Gastrocnemius medialis (tissue), 4 donors: ENCODE measurements at regions of chr6 and their contacts with region 1.

Region 1: DNA sequence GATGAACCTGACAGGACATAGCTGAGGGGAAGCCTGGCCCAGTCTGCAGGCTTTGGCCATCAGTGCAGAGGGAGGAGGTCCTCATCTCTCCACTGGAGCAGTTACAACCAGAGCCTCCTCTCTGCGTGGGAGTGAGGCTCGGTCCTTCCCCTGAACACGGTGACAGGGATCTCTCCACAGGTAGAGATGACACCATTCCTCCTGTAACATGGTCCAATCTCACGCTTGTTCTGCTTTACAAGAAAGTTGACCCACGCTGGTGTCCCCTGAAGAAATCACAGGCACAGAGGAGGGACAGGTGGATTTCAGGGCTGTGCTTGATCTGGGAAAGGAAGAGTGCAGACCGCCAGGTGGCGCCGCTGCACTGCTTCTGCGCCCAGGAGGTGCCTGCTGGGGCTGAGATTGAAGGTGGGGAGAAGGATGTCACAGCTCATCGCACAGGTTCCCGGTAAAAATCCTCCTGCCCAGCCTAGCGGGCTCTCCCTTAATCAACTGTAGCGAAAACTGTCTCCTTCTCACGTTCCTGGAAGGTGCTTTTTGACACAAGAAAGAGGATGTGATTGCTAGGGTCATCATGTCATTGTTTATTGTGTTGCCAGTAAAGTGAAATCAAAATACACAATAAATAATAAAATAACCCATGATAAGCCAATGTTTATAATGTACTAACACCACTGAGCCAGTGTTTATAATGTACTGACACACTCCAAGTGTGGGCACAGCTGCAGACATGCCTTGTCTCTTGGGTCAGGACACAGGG is 20.4 kb downstream of the HLA-G start:
- DNase-seq: peak; percentile 41 to 61
- ATAC-seq: peak; percentile 72 to 89
- H3K4me3 ChIP-seq: no peak overlapping the region
- H3K27ac ChIP-seq: no peak overlapping the region
- H3K4me1 ChIP-seq: peaks cover 0 to 4% of the 10 kb centered on the region in 2 donors
- H3K27me3 ChIP-seq: peaks cover 14 to 28% (median 26%) of the 10 kb centered on the region in 3 donors
- CTCF ChIP-seq: peak; percentile 91 to 93 (median 93)
- POLR2A ChIP-seq: no peak

Region 2: GRCh38 chr6:29976588-29977424 is 128.8 kb after region 1 on chr6:
- in situ Hi-C with region 1: no loop called
- intact Hi-C with region 1: loop called (anchors 2 kb)
- DNase-seq: peak; percentile 61 to 77
- ATAC-seq: peak; percentile 89 to 91
- H3K4me3 ChIP-seq: peak overlapping the region; percentile 58 to 80 (median 71)
- H3K27ac ChIP-seq: peak overlapping the region; percentile 88 to 97 (median 92)
- H3K4me1 ChIP-seq: peaks cover 7 to 19% of the 10 kb centered on the region in 2 donors
- H3K27me3 ChIP-seq: no peaks in the 10 kb centered on the region
- CTCF ChIP-seq: peak; percentile 4 to 37 (median 27)
- POLR2A ChIP-seq: peak; percentile 35 to 71

Region 3: DNA sequence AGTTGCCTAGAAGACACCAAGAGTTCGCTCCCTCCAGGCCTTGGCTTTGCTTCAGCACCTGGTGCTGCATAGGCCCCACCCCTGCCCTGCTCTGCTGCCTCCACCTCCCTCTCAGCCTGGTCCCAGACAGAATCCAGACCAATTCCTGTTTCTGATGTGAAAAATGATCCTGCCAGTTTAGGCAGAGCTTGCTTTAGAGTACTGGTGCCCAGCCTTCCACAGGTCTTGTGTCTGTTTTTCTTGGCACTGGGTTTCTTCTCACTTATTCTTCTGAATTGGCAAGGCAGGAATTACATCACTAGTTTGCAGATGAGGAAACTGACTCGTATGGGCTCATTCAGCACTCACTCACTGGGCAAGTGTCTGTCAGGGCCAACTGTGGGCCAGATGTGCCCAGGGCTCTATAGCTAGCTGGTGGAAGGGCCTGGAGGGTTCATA is 147.3 kb after region 1 on chr6:
- in situ Hi-C with region 1: loop called in 1 of 4 experiments (anchors 10 kb)
- intact Hi-C with region 1: no loop called
- DNase-seq: no peak
- ATAC-seq: no peak
- H3K4me3 ChIP-seq: no peak overlapping the region
- H3K27ac ChIP-seq: no peak overlapping the region
- H3K4me1 ChIP-seq: no peaks in the 10 kb centered on the region
- H3K27me3 ChIP-seq: no peaks in the 10 kb centered on the region
- CTCF ChIP-seq: no peak
- POLR2A ChIP-seq: no peak

Region 4: GRCh38 chr6:30006170-30007131 is 158.4 kb after region 1 on chr6:
- in situ Hi-C with region 1: loop called in 3 of 4 experiments (anchors 5 kb)
- intact Hi-C with region 1: no loop called
- DNase-seq: no peak
- ATAC-seq: peak; percentile 64 to 69
- H3K4me3 ChIP-seq: peak overlapping the region; percentile 58 to 88 (median 68)
- H3K27ac ChIP-seq: peak overlapping the region in 1 of 4 donors; percentile 51
- H3K4me1 ChIP-seq: peaks cover 9 to 11% of the 10 kb centered on the region in 2 donors
- H3K27me3 ChIP-seq: peaks cover 25 to 35% (median 31%) of the 10 kb centered on the region in 3 donors
- CTCF ChIP-seq: no peak
- POLR2A ChIP-seq: no peak

Region 5: GRCh38 chr6:30013291-30013922 is 165.4 kb after region 1 on chr6:
- in situ Hi-C with region 1: loop called in 3 of 4 experiments (anchors 5 kb)
- intact Hi-C with region 1: loop called (anchors 1 kb)
- DNase-seq: no peak
- ATAC-seq: peak; percentile 39 to 58
- H3K4me3 ChIP-seq: no peak overlapping the region
- H3K27ac ChIP-seq: no peak overlapping the region
- H3K4me1 ChIP-seq: no peaks in the 10 kb centered on the region
- H3K27me3 ChIP-seq: peaks cover 10 to 16% (median 12%) of the 10 kb centered on the region in 3 donors
- CTCF ChIP-seq: peak; percentile 25 to 97 (median 71)
- POLR2A ChIP-seq: no peak

Region 6: DNA sequence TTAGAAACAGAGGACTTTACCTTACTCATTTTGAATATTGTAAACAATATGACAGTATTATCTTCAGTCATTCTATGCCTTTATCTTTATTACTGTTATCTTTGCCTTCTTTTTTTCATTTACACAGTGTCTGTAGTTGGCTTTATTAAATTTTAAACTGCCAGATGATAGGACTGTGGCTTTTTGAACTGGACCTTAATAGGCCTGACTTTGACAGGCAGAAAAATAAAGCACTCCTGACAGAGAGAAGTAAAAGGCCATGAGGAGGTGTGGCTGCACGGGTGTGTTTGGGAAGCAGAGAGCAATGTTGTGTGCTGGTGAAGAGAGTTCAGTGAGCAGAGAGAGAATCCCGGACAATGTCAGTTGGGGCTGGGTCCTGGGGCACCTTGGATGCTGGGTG is 295.7 kb after region 1 on chr6:
- in situ Hi-C with region 1: no loop called
- intact Hi-C with region 1: no loop called
- DNase-seq: no peak
- ATAC-seq: no peak
- H3K4me3 ChIP-seq: no peak overlapping the region
- H3K27ac ChIP-seq: no peak overlapping the region
- H3K4me1 ChIP-seq: no peaks in the 10 kb centered on the region
- H3K27me3 ChIP-seq: peaks cover 0 to 11% (median 2%) of the 10 kb centered on the region in 3 donors
- CTCF ChIP-seq: no peak
- POLR2A ChIP-seq: no peak

Region 7: DNA sequence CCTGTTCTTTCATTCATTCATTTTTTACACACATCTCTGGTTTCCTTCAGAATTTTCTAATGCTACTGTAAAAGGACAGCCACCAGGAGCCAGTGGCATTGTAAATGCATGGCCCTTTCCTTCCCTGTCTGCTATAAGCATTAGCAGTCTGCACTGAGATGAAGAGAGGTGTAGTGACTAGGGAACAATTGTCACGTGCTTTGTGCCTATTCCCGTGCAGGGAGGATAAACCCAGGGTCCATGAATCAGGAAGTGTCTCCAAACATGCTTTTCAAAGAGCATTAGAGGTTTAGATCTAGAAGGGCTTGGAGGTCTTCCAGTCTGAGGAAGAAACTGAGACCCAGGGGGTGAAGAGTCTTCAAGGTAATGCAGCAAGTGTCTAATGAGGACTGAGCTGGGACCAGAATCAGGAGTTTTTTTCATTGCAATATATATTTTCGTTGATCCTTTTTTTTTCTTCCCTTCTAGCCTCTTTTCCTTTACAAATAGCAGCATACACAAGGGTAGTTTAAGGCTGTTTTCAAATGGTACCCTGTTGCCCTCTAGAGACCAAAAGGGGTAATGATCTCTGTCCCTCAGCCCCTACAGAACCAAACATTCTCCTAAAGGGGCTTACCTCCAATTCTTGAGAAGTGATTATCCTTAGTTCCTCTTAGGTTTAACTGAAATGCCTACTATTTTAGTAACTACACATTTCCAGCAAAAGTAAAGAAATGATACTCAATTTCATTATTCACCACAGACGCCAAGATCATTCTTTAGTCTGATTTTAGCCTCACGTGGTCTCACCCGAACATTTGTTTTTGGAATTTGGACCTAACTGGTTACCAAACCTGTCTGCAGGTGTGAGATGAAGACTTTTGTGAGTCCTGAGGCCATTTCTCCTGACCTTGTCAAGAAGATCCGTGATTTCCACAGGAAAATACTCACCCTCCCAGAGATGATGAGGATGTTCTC is 321.9 kb after region 1 on chr6:
- in situ Hi-C with region 1: loop called in 1 of 4 experiments (anchors 25 kb)
- intact Hi-C with region 1: no loop called
- DNase-seq: no peak
- ATAC-seq: peak in 1 of 2 donors; percentile 60
- H3K4me3 ChIP-seq: no peak overlapping the region
- H3K27ac ChIP-seq: no peak overlapping the region
- H3K4me1 ChIP-seq: no peaks in the 10 kb centered on the region
- H3K27me3 ChIP-seq: peaks cover 37 to 38% (median 37%) of the 10 kb centered on the region in 3 donors
- CTCF ChIP-seq: peak; percentile 24 to 64 (median 34)
- POLR2A ChIP-seq: no peak